ENCODE measurements at regions of chr18 and their contacts with region 1.

Region 1: DNA sequence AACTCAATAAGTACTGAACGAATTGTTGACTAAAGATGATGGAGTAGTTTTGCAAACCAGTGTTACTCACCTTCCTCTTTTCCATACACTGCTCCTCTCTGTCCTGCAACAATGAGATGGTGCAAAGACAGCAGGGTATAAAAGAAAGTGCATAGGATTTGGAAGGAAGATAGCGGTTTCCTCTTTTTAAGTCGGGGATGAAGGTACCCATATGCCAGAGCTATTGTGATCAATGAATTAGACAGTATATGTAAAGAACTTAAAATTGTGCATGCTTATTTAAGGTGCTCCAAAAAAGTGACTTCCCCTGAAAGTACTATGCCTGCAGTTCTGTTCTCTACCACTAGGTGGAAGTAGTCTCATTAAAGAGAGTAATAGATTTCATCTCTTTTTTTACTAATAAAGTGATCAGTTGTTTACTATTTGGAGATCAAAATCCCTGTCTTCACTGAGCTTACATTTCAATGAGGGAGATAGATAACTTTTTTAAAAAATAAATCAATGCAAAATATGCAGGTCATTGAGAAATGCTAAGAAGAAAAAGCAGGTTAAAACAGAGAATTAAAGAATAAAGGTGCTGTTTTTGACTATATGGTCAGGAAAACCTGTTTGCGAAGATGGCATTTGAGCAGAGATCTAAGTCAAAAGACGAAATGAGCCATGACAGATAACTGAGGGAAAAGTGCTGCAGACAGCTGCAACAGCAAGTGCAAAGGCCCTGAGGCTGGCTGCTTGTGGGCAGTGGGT is 339.7 kb upstream of the SLC14A2 start:
- DNase-seq: no peak
- ATAC-seq: no peak

Region 2: GRCh38 chr18:44968336-44968735 is 307.2 kb before region 1 on chr18:
- intact Hi-C with region 1: no loop called
- DNase-seq: no peak
- ATAC-seq: no peak

Region 3: GRCh38 chr18:45227001-45227742 is 48.4 kb before region 1 on chr18:
- intact Hi-C with region 1: no loop called
- DNase-seq: no peak
- ATAC-seq: no peak

Region 4: GRCh38 chr18:45526114-45526841 is 250.7 kb after region 1 on chr18:
- intact Hi-C with region 1: loop called in 1 of 2 experiments (anchors 2 kb)
- DNase-seq: no peak
- ATAC-seq: peak; percentile 49 to 71

Measured in left cardiac atrium (tissue), 4 donors.